IMR-90 (cell line): ENCODE measurements at regions of chr11 and their contacts with region 1.

Region 1: DNA sequence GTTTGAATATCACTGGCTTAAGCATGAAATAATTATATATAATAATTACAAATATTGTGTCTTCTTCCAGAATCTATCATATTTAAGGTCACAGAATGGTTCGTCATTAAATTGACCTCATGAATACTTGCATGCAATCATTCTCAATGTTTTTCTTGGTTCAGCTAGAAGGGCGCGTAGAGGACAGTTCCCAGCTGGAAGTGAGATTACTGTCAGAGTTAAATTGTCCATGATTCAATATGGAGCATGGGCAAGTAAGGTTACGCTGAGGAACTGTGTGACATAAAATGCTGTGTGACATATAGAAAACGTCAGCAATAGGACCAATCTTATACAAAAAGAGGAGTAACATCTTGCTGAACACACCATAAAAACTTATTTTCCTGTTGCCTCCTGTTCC is 2423.5 kb upstream of the RAG2 start:
- DNase-seq: no peak
- ATAC-seq: no peak
- H3K4me3 ChIP-seq: no peak overlapping the region
- H3K27ac ChIP-seq: no peak overlapping the region
- H3K4me1 ChIP-seq: no peaks in the 10 kb centered on the region
- H3K27me3 ChIP-seq: no peaks in the 10 kb centered on the region
- CTCF ChIP-seq: no peak
- POLR2A ChIP-seq: no peak
- RAD21 ChIP-seq: no peak

Region 2: DNA sequence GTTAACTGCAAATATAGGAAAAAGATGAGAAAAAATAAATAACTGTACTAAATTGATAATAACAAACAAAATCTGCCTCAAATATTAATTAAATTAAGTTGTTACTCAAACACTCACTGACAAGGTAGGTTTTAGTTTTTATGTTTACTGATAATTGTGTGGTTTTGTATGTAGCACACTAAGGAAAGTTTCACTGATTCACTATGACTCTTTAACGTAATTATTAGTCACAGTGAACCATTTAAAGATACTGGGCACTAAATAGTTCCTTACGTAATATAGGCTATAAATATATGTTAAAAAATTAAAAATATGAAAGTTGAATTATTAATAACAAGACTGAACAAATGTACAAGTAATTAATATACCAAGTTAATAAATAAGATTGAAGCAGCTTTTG is 93.5 kb before region 1 on chr11:
- CTCF ChIA-PET with region 1: no interaction called
- POLR2A ChIA-PET with region 1: no interaction called
- dilution Hi-C with region 1: no loop called
- in situ Hi-C with region 1: no loop called
- intact Hi-C with region 1: no loop called
- DNase-seq: no peak
- ATAC-seq: no peak
- H3K4me3 ChIP-seq: no peak overlapping the region
- H3K27ac ChIP-seq: no peak overlapping the region
- H3K4me1 ChIP-seq: no peaks in the 10 kb centered on the region
- H3K27me3 ChIP-seq: no peaks in the 10 kb centered on the region
- CTCF ChIP-seq: no peak
- POLR2A ChIP-seq: no peak
- RAD21 ChIP-seq: no peak

Region 3: GRCh38 chr11:38968951-38969350 is 52.6 kb before region 1 on chr11:
- CTCF ChIA-PET with region 1: no interaction called
- POLR2A ChIA-PET with region 1: no interaction called
- dilution Hi-C with region 1: no loop called
- in situ Hi-C with region 1: no loop called
- intact Hi-C with region 1: loop called (anchors 10 kb)
- DNase-seq: no peak
- ATAC-seq: no peak
- H3K4me3 ChIP-seq: no peak overlapping the region
- H3K27ac ChIP-seq: no peak overlapping the region
- H3K4me1 ChIP-seq: no peaks in the 10 kb centered on the region
- H3K27me3 ChIP-seq: no peaks in the 10 kb centered on the region
- CTCF ChIP-seq: no peak
- POLR2A ChIP-seq: no peak
- RAD21 ChIP-seq: no peak